ENCODE measurements at regions of chr7 and their contacts with region 1.

Region 1: DNA sequence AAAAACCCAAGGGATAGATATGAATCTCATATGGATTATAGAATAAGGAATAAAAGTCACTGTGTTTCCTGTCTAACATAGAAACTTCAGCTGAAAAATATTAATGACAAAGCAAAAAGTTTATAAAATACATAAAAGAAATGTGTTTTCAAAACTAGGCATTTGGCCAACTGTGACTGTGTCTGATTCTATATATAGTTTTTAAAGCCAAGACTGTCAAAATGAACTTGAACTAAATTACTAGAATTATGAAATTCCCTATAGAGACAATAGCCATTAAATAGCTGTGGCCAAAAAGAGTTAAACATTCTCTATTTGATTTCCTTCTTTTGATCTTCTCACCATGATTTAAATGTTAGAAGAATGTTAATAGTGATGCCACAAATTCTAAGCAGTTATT is 311.2 kb upstream of the SEMA3D start:
- DNase-seq: no peak
- ATAC-seq: no peak
- H3K4me3 ChIP-seq: no peak overlapping the region
- H3K4me3 Mint-ChIP-seq: no peak overlapping the region
- H3K27ac ChIP-seq: no peak overlapping the region
- H3K27ac Mint-ChIP-seq: no peak overlapping the region
- H3K4me1 ChIP-seq: no peaks in the 10 kb centered on the region
- H3K4me1 Mint-ChIP-seq: no peaks in the 10 kb centered on the region
- H3K27me3 ChIP-seq: no peaks in the 10 kb centered on the region
- H3K27me3 Mint-ChIP-seq: no peaks in the 10 kb centered on the region

Region 2: DNA sequence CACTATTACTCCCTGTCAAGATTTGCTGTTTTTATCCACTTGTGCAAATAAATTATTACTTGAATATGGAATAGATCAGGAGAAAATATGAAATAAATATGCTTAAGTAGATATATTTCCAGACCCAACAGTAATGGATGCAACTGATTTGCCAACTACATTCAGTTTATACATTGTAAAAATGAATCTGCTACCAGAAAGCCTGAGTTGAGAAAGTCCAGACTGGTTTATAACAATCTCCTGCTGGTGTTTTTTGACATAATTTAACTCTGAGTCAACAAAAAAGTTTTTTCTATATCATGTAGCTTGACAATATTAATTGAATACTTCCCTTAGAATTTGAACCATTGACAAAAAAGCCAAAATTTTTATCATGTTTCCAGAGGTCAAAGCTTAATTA is 45.4 kb before region 1 on chr7:
- CTCF ChIA-PET with region 1: interaction called in 1 of 2 experiments, 17 read pairs
- POLR2A ChIA-PET with region 1: no interaction called
- DNase-seq: no peak
- ATAC-seq: no peak
- H3K4me3 ChIP-seq: no peak overlapping the region
- H3K4me3 Mint-ChIP-seq: no peak overlapping the region
- H3K27ac ChIP-seq: no peak overlapping the region
- H3K27ac Mint-ChIP-seq: no peak overlapping the region
- H3K4me1 ChIP-seq: no peaks in the 10 kb centered on the region
- H3K4me1 Mint-ChIP-seq: no peaks in the 10 kb centered on the region
- H3K27me3 ChIP-seq: no peaks in the 10 kb centered on the region
- H3K27me3 Mint-ChIP-seq: no peaks in the 10 kb centered on the region

Measured in T-cell (primary cell).